ENCODE measurements at regions of chr10 and their contacts with region 1.

Region 1: DNA sequence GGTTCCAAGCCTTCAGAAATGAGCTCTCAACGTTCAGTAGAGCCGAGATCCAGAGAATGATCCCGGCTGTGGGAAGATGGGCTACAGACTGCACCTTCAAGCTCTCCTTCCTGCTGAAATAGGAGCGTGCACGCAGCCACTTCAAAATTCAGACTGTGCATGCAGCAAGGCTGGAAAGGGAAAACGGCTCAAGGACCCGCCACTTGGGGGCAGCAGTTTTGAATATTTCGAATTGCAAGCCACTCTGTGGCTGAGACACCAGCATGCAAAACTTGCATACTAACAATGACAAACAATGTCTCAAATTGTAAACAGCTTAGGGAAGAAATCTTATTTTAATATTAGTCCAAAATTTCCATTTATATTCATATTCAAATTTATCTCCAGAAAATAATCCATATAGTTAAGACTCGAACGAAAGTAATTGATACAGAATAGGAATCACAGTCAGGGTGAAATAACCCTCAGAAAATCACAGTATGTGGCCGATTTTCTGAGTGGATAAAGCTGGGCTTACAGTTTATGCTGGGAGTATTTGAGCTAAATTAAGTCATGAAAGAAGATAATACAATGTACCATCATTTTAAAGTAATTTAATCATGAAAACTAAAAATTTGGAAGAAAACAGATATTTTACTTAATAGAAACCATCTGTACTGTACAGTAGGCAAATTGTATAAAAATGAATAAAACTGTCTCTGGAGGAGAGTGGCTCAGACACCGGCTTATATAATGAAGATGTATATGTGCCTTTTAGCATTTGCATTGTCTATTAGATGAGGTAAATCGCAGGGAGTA is 137.9 kb upstream of the MKI67 start:
- DNase-seq: peak; percentile 16
- H3K4me3 Mint-ChIP-seq: no peak overlapping the region
- H3K27ac Mint-ChIP-seq: no peak overlapping the region
- H3K4me1 Mint-ChIP-seq: no peaks in the 10 kb centered on the region
- H3K27me3 Mint-ChIP-seq: peaks cover 38% of the 10 kb centered on the region

Region 2: GRCh38 chr10:128310971-128311658 is 47.0 kb after region 1 on chr10:
- intact Hi-C with region 1: no loop called
- DNase-seq: no peak
- H3K4me3 Mint-ChIP-seq: no peak overlapping the region
- H3K27ac Mint-ChIP-seq: no peak overlapping the region
- H3K4me1 Mint-ChIP-seq: no peaks in the 10 kb centered on the region
- H3K27me3 Mint-ChIP-seq: peaks cover 2% of the 10 kb centered on the region

Region 3: GRCh38 chr10:128530301-128530700 is 266.2 kb after region 1 on chr10:
- intact Hi-C with region 1: loop called (anchors 5 kb)
- DNase-seq: no peak
- H3K4me3 Mint-ChIP-seq: no peak overlapping the region
- H3K27ac Mint-ChIP-seq: no peak overlapping the region
- H3K4me1 Mint-ChIP-seq: no peaks in the 10 kb centered on the region
- H3K27me3 Mint-ChIP-seq: peaks cover 1% of the 10 kb centered on the region

Measured in activated T-helper 1 cell treated with anti-CD3 and anti-CD28 coated beads, Interleukin-12 subunit alpha, Interleukin-12 subunit beta, Interleukin-2, Interleukin-4 antibody, amounts not matched to agents 30 ng/mL and 10 ng/mL and 1 ng/mL, durations not matched to agents 14 hours and 24 hours and 36 hours (primary cell).